Naive thymus-derived CD4-positive, alpha-beta T cell (primary cell): ENCODE measurements at regions of chr10 and their contacts with region 1.

Region 1: GRCh38 chr10:113689057-113689456 is 9.3 kb downstream of the CASP7 start:
- DNase-seq: no peak
- ATAC-seq: no peak
- H3K4me3 ChIP-seq: no peak overlapping the region
- H3K4me3 Mint-ChIP-seq: peak overlapping the region in 3 of 10 donors; percentile 1 to 75 (median 34)
- H3K27ac ChIP-seq: no peak overlapping the region
- H3K27ac Mint-ChIP-seq: peak overlapping the region in 1 of 9 donors; percentile 85
- H3K4me1 ChIP-seq: peaks cover 0 to 7% of the 10 kb centered on the region in 2 donors
- H3K4me1 Mint-ChIP-seq: peaks cover 17 to 48% (median 27%) of the 10 kb centered on the region in 7 donors
- H3K27me3 ChIP-seq: no peaks in the 10 kb centered on the region
- H3K27me3 Mint-ChIP-seq: no peaks in the 10 kb centered on the region

Region 2: GRCh38 chr10:114083040-114083439 is 394.0 kb after region 1 on chr10:
- CTCF ChIA-PET with region 1: no interaction called
- POLR2A ChIA-PET with region 1: no interaction called
- intact Hi-C with region 1: loop called in 1 of 2 experiments (anchors 5 kb)
- DNase-seq: peak in 2 of 9 donors; percentile 24 to 38
- ATAC-seq: peak; percentile 18
- H3K4me3 ChIP-seq: no peak overlapping the region
- H3K4me3 Mint-ChIP-seq: no peak overlapping the region
- H3K27ac ChIP-seq: no peak overlapping the region
- H3K27ac Mint-ChIP-seq: peak overlapping the region in 1 of 9 donors; percentile 48
- H3K4me1 ChIP-seq: no peaks in the 10 kb centered on the region
- H3K4me1 Mint-ChIP-seq: no peaks in the 10 kb centered on the region
- H3K27me3 ChIP-seq: no peaks in the 10 kb centered on the region
- H3K27me3 Mint-ChIP-seq: peaks cover 0 to 31% (median 4%) of the 10 kb centered on the region in 5 donors